Activated CD4-positive, alpha-beta T cell treated with anti-CD3 and anti-CD28 coated beads, Interleukin-2, amount 10 ng/mL, durations not matched to agents 24 days and 14 days (primary cell): ENCODE measurements at regions of chr1 and their contacts with region 1.

Region 1: GRCh38 chr1:176897350-176898236 is 266.9 kb downstream of the ASTN1 start:
- DNase-seq: peak; percentile 77
- H3K4me3 Mint-ChIP-seq: no peak overlapping the region
- H3K27ac Mint-ChIP-seq: no peak overlapping the region
- H3K4me1 Mint-ChIP-seq: peaks cover 4% of the 10 kb centered on the region
- H3K27me3 Mint-ChIP-seq: peaks cover 3% of the 10 kb centered on the region

Region 2: DNA sequence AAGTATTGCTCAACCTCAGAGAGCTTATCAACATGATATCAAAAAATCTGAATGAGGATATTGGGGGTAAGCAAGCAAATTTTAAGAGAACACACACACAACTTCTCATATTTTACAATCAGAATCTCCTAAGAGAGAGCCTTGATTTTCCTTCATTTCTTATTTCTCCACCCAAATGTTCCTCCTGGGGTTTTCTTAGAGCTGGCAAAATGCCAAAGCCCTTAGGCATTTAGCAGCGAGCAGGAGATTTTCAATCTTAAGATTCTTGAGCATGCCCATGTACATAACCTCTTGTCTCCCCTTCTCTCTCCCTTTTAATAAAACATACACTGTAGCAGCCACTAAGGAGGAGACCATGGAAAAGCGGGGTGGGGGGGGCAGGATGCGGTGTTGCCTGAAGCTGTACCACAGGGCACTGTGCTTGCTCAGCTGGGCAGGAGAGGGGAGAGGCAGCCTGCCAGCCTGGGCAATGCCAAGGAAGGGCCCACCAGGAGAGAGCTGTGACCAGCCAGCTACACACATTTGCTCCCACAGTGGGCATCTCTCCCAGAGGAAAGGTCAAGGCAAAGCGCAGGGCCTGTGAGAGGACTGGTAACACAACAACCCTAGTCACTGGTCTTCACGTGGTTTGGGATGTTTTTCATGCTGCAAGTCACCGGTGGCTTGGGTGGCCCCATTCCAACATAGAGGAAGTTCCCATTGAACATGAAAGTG is 277.5 kb after region 1 on chr1:
- intact Hi-C with region 1: loop called (anchors 5 kb)
- DNase-seq: no peak
- H3K4me3 Mint-ChIP-seq: no peak overlapping the region
- H3K27ac Mint-ChIP-seq: no peak overlapping the region
- H3K4me1 Mint-ChIP-seq: no peaks in the 10 kb centered on the region
- H3K27me3 Mint-ChIP-seq: peaks cover 8% of the 10 kb centered on the region

Region 3: DNA sequence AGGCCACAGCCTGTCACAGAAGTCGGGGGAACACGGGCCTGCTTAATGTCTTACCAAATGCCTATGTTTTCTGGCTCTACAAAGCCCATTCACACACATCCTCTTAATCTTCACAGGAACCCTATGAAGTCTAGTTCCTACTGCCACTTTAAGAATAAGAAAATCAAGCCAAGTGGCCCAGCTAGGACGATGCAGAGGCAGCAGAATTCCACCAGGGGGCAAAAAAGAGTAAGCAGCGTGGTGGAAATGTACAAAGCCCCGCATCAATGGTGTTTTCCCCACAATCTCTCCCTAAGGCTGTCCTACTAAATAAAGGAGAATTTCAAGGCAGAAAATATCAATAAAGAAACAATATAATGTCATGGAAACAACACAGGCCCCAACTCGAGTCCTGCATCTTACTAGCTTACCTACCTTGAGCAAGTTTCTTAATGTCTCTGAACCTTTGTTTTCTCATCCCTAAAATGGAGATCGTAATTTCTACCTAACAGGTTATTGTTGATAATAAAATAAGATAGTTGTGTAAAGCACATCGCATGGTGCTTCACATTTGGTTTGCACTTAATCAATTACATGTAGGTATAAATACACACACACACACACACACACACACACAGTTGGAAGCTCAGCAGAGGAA is 1050.9 kb after region 1 on chr1:
- intact Hi-C with region 1: loop called (anchors 5 kb)
- DNase-seq: peak; percentile 74
- H3K4me3 Mint-ChIP-seq: no peak overlapping the region
- H3K27ac Mint-ChIP-seq: no peak overlapping the region
- H3K4me1 Mint-ChIP-seq: no peaks in the 10 kb centered on the region
- H3K27me3 Mint-ChIP-seq: no peaks in the 10 kb centered on the region